IMR-90 (cell line): ENCODE measurements at regions of chr6 and their contacts with region 1.

Region 1: GRCh38 chr6:22145823-22146677 is 150.8 kb downstream of the PRL start:
- DNase-seq: peak; percentile 78
- ATAC-seq: peak; percentile 12; the same call in 1 of the 2 replicates
- H3K4me3 ChIP-seq: no peak overlapping the region
- H3K27ac ChIP-seq: peak overlapping the region; percentile 95
- H3K4me1 ChIP-seq: peaks cover 24% of the 10 kb centered on the region
- H3K27me3 ChIP-seq: no peaks in the 10 kb centered on the region
- CTCF ChIP-seq: peak; percentile 43
- POLR2A ChIP-seq: no peak
- RAD21 ChIP-seq: 0 out of 2 replicates have a peak, but pooled peaks have one; percentile 35

Region 2: DNA sequence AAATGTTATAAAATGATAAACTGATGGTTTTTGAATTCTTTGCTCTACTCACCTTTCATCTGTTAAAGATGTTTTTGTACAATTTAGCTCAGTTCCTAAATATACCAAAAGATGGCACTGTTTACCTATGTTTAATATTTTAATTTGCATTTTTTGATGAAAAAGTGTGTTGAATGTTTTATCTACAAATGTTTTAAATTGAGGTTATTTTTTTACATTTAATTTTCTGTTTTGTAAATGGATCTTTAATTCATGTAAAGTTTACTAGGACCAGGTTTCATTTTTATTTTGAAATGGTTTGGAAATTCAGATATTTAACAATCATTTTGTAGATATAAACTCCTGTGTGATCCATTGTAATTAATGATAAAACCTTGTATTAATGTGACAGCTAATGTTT is 1581.8 kb before region 1 on chr6:
- CTCF ChIA-PET with region 1: no interaction called
- POLR2A ChIA-PET with region 1: no interaction called
- dilution Hi-C with region 1: no loop called
- in situ Hi-C with region 1: loop called (anchors 25 kb)
- intact Hi-C with region 1: loop called (anchors 10 kb)
- DNase-seq: peak; percentile 27
- ATAC-seq: peak; percentile 64
- H3K4me3 ChIP-seq: no peak overlapping the region
- H3K27ac ChIP-seq: no peak overlapping the region
- H3K4me1 ChIP-seq: no peaks in the 10 kb centered on the region; the same call in 1 of the 2 replicates
- H3K27me3 ChIP-seq: no peaks in the 10 kb centered on the region
- CTCF ChIP-seq: peak; percentile 59
- POLR2A ChIP-seq: no peak
- RAD21 ChIP-seq: peak; percentile 61

Region 3: DNA sequence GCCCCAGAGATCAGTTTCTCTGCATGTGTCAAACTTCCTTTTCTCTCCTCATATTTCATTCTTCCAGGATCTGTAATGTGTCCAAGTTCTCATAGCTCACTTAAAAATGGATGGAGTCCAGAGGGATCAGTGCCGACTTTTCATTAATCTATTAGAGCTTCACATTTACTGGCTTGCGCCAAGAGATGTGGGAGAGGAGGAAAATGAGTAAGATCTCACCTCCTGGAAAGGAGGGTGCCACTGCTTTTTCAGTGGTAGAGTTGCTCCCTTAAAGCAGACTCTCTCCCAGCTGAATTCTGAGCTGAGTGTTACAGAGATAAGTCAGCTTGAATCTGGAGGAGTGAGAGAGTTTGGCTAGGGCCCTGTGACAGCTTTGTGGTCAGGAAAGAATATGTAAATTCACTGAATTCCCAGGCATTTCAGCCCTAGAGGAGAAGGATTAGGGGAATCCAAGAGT is 376.6 kb before region 1 on chr6:
- CTCF ChIA-PET with region 1: no interaction called
- POLR2A ChIA-PET with region 1: no interaction called
- dilution Hi-C with region 1: no loop called
- in situ Hi-C with region 1: no loop called
- intact Hi-C with region 1: loop called (anchors 5 kb)
- DNase-seq: peak; percentile 98
- ATAC-seq: peak; percentile 84
- H3K4me3 ChIP-seq: no peak overlapping the region
- H3K27ac ChIP-seq: peak overlapping the region; percentile 41; the same call in 1 of the 2 replicates
- H3K4me1 ChIP-seq: peaks cover 6% of the 10 kb centered on the region
- H3K27me3 ChIP-seq: no peaks in the 10 kb centered on the region
- CTCF ChIP-seq: no peak
- POLR2A ChIP-seq: peak; percentile 68; the same call in 1 of the 2 replicates
- RAD21 ChIP-seq: no peak

Region 4: DNA sequence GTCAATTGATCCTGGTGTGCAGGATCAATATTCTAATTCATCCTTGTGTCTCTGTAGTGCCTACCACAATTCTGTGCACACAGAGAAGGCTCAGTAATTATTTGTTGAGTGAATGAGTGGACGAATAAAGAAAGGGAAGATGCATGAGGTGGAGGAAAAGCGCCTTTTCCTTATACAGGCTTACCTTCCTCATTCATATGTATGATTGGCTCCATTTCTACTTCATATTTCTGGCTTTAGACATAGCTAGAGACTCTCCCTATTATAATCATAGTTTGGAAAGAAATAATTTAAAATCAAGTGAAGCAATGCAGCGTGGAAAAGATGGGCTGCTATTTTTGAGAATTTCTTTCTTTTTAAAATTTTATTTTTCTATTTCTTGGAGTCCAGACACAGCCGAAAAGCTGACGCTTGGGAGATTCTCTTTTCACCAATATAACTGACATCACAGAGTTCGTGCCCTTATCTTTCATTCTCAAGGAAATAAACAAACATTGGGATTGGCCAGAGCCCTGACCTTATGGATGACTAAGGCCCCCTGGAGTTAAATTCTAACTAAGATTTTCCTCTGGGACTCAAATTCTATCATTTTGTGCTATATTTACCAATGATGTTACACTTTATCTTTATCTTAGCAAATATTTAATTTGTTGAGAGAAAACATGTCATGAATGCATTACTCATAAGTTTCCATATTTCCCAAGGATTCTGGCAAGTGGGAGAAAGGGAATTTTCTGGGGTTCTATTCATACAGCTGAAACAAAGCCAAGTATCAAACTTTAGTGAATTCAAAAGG is 102.7 kb after region 1 on chr6:
- CTCF ChIA-PET with region 1: no interaction called
- POLR2A ChIA-PET with region 1: no interaction called
- dilution Hi-C with region 1: no loop called
- in situ Hi-C with region 1: no loop called
- intact Hi-C with region 1: loop called (anchors 5 kb)
- DNase-seq: peak; percentile 83
- ATAC-seq: peak; percentile 74
- H3K4me3 ChIP-seq: no peak overlapping the region
- H3K27ac ChIP-seq: peak overlapping the region; percentile 43; the same call in 1 of the 2 replicates
- H3K4me1 ChIP-seq: peaks cover 11% of the 10 kb centered on the region
- H3K27me3 ChIP-seq: no peaks in the 10 kb centered on the region
- CTCF ChIP-seq: no peak
- POLR2A ChIP-seq: no peak
- RAD21 ChIP-seq: no peak; the same call in 1 of the 2 replicates

Region 5: DNA sequence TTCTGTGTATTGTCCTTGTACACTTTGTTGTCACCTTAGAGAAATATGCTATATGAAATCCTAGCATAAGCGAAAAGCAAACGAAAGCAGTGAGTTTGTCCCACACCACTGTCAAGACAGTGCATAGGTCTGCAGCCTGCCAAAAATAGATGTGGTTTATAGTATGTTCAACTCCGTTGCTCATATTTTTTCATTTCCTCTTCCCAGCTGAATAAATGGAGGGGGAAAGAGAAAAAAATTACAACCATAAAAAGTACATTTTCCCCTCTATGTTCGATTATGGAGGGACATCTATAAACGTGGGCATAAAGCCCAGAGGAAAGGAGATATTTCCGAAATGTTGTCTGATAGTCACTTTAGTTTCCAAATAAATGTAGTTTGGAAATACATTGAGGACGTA is 125.0 kb after region 1 on chr6:
- CTCF ChIA-PET with region 1: no interaction called
- POLR2A ChIA-PET with region 1: no interaction called
- dilution Hi-C with region 1: no loop called
- in situ Hi-C with region 1: no loop called
- intact Hi-C with region 1: no loop called
- DNase-seq: peak; percentile 23
- ATAC-seq: no peak
- H3K4me3 ChIP-seq: no peak overlapping the region
- H3K27ac ChIP-seq: no peak overlapping the region
- H3K4me1 ChIP-seq: no peaks in the 10 kb centered on the region
- H3K27me3 ChIP-seq: no peaks in the 10 kb centered on the region
- CTCF ChIP-seq: no peak
- POLR2A ChIP-seq: no peak
- RAD21 ChIP-seq: no peak

Region 6: DNA sequence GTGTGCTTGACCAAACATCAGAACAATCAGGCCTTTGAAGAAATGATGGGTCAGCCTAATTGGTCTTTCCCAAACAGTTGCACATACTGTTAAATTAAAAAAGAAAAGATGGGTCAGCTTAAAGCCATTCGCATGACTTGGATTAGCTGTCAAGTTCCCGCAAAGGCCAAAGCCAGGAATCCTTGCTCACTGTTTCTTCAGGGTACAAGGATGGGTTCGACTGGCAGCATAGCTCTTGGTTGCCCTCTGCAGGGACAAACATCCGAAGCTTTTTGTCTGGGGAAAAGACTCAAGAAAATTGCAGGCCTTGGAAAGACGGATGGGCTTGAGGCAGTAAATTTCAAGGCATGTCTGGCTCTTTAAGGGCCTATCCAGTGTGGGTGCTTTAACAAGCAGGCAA is 591.3 kb after region 1 on chr6:
- CTCF ChIA-PET with region 1: interaction called, 4 read pairs
- POLR2A ChIA-PET with region 1: no interaction called
- dilution Hi-C with region 1: no loop called
- in situ Hi-C with region 1: no loop called
- intact Hi-C with region 1: loop called (anchors 1 kb)
- DNase-seq: peak; percentile 53
- ATAC-seq: peak; percentile 63
- H3K4me3 ChIP-seq: no peak overlapping the region
- H3K27ac ChIP-seq: no peak overlapping the region
- H3K4me1 ChIP-seq: no peaks in the 10 kb centered on the region; the same call in 1 of the 2 replicates
- H3K27me3 ChIP-seq: no peaks in the 10 kb centered on the region
- CTCF ChIP-seq: peak; percentile 49
- POLR2A ChIP-seq: no peak
- RAD21 ChIP-seq: peak; percentile 64

Region 7: DNA sequence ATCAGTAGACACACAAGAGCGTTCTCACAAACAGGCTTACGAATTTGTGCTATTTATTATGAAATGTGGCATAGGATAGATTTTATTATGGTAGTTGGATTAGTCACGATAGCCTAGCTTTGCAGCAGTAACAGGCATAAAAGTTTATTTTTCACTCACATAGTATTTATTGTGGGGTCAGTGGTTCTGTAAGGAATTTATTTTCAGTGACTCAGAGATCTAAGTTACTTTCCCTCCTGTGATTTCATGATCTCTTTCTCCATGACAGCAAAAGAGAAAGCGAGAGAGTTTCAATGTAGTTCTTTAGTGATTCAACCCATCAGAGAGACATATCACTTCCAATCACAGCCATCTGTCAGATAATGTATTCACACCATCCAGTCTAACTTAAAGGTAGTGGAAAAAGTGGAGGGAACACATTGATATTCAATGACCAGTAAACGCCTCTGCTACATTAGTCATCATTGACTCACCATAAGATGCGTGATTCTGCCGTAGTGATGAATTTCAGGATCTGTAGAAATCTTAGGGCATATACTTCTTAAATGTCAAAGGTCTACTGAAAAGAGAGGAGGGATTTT is 1028.8 kb after region 1 on chr6:
- CTCF ChIA-PET with region 1: no interaction called
- POLR2A ChIA-PET with region 1: no interaction called
- dilution Hi-C with region 1: no loop called
- in situ Hi-C with region 1: no loop called
- intact Hi-C with region 1: loop called (anchors 2 kb)
- DNase-seq: peak; percentile 97
- ATAC-seq: peak; percentile 89
- H3K4me3 ChIP-seq: no peak overlapping the region
- H3K27ac ChIP-seq: peak overlapping the region; percentile 92; the same call in 1 of the 2 replicates
- H3K4me1 ChIP-seq: peaks cover 10% of the 10 kb centered on the region
- H3K27me3 ChIP-seq: no peaks in the 10 kb centered on the region
- CTCF ChIP-seq: no peak
- POLR2A ChIP-seq: no peak
- RAD21 ChIP-seq: no peak; the same call in 1 of the 2 replicates

Region 8: DNA sequence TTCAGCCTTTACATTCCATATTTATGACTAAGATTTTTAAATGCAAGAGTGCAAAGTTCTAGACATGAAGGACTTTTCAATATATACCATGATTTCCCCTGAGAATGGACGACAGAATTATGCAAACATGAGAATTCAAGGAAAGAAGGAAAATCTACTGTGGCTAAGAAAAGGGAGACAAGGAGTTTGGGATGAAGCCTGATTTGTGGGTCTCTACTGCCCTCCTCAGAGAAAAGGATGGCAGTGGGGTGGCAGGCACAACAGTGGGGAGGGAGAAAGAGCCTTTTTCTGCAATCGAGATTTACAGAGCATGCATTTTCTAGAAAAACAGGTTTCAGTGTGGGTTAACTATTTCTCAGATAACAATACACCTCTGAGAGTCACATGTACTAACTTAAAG is 1513.1 kb after region 1 on chr6:
- CTCF ChIA-PET with region 1: no interaction called
- POLR2A ChIA-PET with region 1: no interaction called
- dilution Hi-C with region 1: no loop called
- in situ Hi-C with region 1: no loop called
- intact Hi-C with region 1: loop called (anchors 10 kb)
- DNase-seq: peak; percentile 6
- ATAC-seq: peak; percentile 72
- H3K4me3 ChIP-seq: no peak overlapping the region
- H3K27ac ChIP-seq: no peak overlapping the region
- H3K4me1 ChIP-seq: no peaks in the 10 kb centered on the region
- H3K27me3 ChIP-seq: no peaks in the 10 kb centered on the region
- CTCF ChIP-seq: 0 out of 2 replicates have a peak, but pooled peaks have one; percentile 2
- POLR2A ChIP-seq: no peak
- RAD21 ChIP-seq: no peak